AG04449 (cell line): ENCODE measurements at regions of chr10 and their contacts with region 1.

Region 1: DNA sequence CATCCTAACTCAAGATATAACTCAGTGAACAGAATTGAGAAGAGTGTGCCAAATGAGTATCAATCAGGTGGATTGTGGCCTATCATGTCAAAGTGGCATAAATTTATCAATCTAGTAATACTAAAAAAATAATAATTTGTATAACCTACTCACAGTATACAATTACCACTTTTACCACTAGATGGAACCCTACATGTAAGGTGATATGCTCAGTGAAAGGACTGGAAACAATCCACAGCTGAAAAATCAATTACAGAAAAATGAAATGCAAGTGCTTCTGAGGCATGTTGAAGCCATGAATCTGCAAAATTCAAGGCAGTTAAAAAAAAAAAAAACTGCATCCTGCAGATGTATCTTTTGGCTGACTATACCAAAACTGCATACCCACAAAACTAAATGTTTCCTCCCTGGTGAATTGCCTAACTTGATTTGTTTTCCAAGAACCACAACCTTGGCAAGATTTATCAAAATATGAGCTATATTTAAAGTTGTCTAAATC is 13.9 kb downstream of the ARHGAP19 start:
- DNase-seq: peak; percentile 93
- H3K4me3 ChIP-seq: no peak overlapping the region
- CTCF ChIP-seq: peak; percentile 41

Region 2: GRCh38 chr10:97157578-97158095 is 120.9 kb before region 1 on chr10:
- CTCF ChIA-PET with region 1: no interaction called
- POLR2A ChIA-PET with region 1: no interaction called
- DNase-seq: no peak
- H3K4me3 ChIP-seq: no peak overlapping the region
- CTCF ChIP-seq: no peak

Region 3: GRCh38 chr10:97170326-97170725 is 108.2 kb before region 1 on chr10:
- CTCF ChIA-PET with region 1: no interaction called
- POLR2A ChIA-PET with region 1: no interaction called
- DNase-seq: no peak
- H3K4me3 ChIP-seq: no peak overlapping the region
- CTCF ChIP-seq: no peak

Region 4: GRCh38 chr10:97234400-97234799 is 44.1 kb before region 1 on chr10:
- CTCF ChIA-PET with region 1: interaction called, 13 read pairs
- POLR2A ChIA-PET with region 1: no interaction called
- DNase-seq: no peak
- H3K4me3 ChIP-seq: no peak overlapping the region
- CTCF ChIP-seq: peak; percentile 45

Region 5: GRCh38 chr10:97291357-97292096 is 13.0 kb after region 1 on chr10:
- CTCF ChIA-PET with region 1: interaction called, 28 read pairs
- POLR2A ChIA-PET with region 1: interaction called, 3 read pairs
- DNase-seq: no peak
- H3K4me3 ChIP-seq: peak overlapping the region; percentile 86
- CTCF ChIP-seq: no peak

Region 6: GRCh38 chr10:97318772-97319651 is 40.5 kb after region 1 on chr10 and contains the start of gene FRAT1:
- CTCF ChIA-PET with region 1: interaction called, 15 read pairs
- POLR2A ChIA-PET with region 1: no interaction called
- DNase-seq: no peak
- H3K4me3 ChIP-seq: peak within 1 kb of the TSS; percentile 88
- CTCF ChIP-seq: no peak

Region 7: DNA sequence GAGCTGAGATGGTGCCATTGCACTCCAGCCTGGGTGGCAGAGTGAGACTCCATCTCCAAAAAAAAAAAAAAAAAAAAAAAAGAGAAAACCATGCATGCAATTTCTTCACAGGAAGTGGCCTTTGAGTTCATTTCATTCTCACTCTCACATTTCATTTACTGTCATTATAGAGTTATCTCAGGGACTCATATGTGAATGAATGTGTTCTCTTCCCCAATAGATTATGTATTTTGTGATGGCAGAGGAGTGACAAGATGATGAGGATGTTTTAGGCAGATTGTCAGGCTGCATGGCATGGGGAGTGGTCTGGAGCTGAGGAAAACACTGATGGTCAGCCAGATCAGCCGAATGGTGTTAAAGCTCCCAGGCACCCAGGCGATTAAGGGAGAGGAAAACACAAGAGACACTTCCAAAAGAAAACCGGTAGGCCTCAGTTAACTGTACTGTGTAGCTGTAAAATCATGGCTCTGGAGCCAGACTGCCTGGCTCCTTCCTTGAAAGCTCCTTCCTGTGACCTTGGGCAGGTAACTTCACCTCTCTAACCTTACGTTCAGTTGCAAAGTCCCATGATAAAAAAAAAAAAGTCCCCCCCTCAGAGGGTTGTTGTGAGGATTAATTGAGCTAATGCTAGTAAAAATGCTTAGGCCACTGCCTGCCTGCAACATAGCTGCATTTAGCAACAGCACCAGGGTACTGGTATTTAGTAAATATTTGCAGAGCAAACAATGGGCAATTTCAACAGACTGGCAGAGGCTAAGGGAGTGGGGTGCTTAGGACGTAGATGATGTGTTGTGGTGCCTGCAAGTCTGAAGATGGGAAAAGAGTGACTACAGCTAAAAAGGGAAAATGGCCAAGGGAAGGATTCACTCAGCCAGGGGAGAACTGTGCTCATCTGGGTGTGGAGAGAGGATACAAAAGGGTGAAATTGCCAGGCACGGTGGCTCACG is 49.1 kb after region 1 on chr10:
- CTCF ChIA-PET with region 1: interaction called, 58 read pairs
- POLR2A ChIA-PET with region 1: interaction called, 3 read pairs
- DNase-seq: no peak
- H3K4me3 ChIP-seq: no peak overlapping the region
- CTCF ChIP-seq: no peak

Region 8: DNA sequence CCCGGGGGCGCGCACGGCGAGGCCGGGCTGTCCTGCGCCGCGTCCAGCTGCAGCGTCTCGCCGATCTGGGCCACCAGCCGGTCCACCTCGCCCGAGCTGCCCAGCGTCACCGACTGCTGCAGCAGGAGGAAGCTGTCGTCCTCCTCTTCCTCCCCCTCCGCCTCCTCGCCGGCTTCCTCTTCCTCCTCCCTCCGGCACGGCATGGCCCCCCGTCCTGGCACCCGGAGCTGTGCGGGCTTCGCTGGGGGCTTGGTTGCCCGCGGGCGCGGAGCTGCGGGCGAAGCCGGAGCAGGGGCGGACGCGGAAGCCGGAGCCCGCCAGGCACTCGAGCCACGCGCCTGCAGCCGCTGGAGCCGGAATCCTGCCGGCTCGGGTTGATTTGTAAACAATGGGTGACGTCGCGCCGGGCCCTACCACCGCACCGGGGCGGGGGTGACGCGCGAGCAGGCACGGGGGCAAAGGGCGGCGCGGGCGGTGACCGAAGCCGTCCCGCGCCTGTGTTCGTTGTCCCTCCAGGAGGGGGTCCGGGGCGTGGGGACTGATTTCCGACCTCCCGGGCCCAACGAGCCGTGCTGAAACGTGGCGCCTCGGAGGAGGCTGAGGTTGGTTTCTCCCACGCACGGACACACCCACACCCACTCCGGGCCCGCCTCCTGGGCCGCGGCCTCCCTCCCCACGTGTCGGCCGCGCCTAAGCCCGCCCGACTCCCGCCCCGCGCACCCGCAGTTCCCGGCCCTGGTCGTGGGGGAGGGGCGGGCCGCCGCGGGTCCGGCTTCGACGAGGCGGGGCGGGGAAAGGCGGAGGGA is 56.0 kb after region 1 on chr10 and contains the start of gene FRAT2:
- CTCF ChIA-PET with region 1: interaction called, 58 read pairs
- POLR2A ChIA-PET with region 1: interaction called, 3 read pairs
- DNase-seq: no peak
- H3K4me3 ChIP-seq: peak within 1 kb of the TSS; percentile 75
- CTCF ChIP-seq: no peak

Region 9: GRCh38 chr10:97355571-97355975 is 77.0 kb after region 1 on chr10:
- CTCF ChIA-PET with region 1: interaction called, 24 read pairs
- POLR2A ChIA-PET with region 1: no interaction called
- DNase-seq: no peak
- H3K4me3 ChIP-seq: no peak overlapping the region
- CTCF ChIP-seq: peak; percentile 16